ENCODE measurements at regions of chr7 and their contacts with region 1.

Region 1: DNA sequence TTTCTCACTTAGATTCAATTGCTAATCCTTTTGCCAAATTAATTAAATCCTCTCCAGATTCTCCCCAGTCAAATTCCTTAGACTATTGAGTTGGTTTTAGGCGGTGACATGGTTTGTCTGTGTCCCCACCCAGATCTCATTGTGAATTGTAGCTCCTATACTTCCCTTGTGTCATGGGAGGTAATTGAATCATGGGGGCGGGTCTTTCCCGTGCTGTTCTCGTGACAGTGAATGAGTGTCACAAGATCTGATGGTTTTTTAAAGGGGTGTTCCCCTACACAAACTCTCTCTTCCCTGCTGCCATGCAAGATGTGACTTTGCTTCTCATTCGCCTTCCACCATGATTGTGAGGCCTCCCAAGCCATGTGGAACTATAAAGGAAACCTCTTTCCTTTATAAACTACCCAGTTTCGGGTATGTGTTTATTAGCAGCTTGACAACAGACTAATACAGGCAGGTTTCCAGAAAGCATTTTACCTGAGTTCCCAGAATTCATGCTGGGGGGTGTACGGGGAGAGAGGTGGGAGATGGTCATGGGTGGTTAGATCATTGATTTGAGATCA is 44.7 kb upstream of the GARS1 start:
- DNase-seq: no peak
- H3K4me3 ChIP-seq: no peak overlapping the region
- H3K27ac ChIP-seq: peak overlapping the region in 1 of 4 donors; percentile 39
- H3K4me1 ChIP-seq: peaks cover 0 to 5% (median 0%) of the 10 kb centered on the region in 4 donors
- H3K27me3 ChIP-seq: no peaks in the 10 kb centered on the region
- CTCF ChIP-seq: no peak
- EP300 ChIP-seq: no peak
- POLR2A ChIP-seq: no peak

Region 2: DNA sequence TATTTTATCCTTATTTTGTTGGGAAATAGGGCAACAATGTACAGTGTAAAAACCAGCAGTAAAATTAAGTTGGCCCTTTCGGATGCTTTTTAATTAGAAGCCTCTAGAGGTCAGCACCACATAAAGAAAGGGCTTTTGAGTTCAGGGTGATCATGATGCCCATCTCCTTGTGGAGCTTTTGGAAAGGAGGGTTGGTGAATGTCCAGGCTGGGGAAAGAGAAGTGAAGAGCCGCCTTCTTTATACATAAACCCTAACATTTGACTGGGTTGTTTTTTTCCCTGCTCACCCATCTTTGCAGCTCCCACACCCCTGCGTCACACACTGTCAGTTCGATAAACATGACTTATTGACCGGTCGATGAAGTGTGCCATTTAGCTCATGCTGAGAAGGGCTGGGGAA is 385.4 kb before region 1 on chr7:
- intact Hi-C with region 1: loop called (anchors 5 kb)
- DNase-seq: no peak
- H3K4me3 ChIP-seq: no peak overlapping the region
- H3K27ac ChIP-seq: peak overlapping the region in 1 of 4 donors; percentile 45
- H3K4me1 ChIP-seq: peaks cover 0 to 22% (median 0%) of the 10 kb centered on the region in 4 donors
- H3K27me3 ChIP-seq: no peaks in the 10 kb centered on the region
- CTCF ChIP-seq: peak in 3 of 4 experiments; percentile 32 to 45 (median 42)
- EP300 ChIP-seq: no peak
- POLR2A ChIP-seq: no peak

Region 3: DNA sequence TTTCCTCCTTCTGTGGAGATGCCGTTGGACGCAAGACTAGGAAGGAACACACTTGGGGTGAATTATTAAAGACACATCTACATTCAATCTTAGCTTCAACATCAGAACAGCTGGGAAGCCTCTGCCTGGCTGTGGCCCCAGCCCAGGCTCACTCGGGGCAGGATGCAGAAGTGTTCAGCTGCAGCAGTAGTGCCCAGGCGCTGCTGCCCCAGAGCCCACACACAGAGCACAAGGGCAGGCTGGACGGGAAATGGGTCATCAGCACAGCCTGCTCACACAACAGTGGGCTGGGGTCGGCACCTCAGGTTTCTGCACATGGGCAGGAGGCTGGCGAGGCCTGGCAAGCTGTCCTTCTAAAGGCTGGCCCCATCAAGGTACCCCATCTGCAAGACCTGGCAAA is 114.0 kb before region 1 on chr7:
- intact Hi-C with region 1: no loop called
- DNase-seq: peak; percentile 45
- H3K4me3 ChIP-seq: no peak overlapping the region
- H3K27ac ChIP-seq: no peak overlapping the region
- H3K4me1 ChIP-seq: peaks cover 0 to 43% (median 29%) of the 10 kb centered on the region in 4 donors
- H3K27me3 ChIP-seq: no peaks in the 10 kb centered on the region
- CTCF ChIP-seq: no peak
- EP300 ChIP-seq: no peak
- POLR2A ChIP-seq: no peak

Region 4: GRCh38 chr7:30564243-30564892 is 14.4 kb after region 1 on chr7:
- intact Hi-C with region 1: no loop called
- DNase-seq: peak; percentile 89
- H3K4me3 ChIP-seq: no peak overlapping the region
- H3K27ac ChIP-seq: no peak overlapping the region
- H3K4me1 ChIP-seq: no peaks in the 10 kb centered on the region
- H3K27me3 ChIP-seq: no peaks in the 10 kb centered on the region
- CTCF ChIP-seq: peak; percentile 67 to 80 (median 76)
- EP300 ChIP-seq: no peak
- POLR2A ChIP-seq: no peak